Activated CD8-positive, alpha-beta memory T cell treated with anti-CD3 and anti-CD28 coated beads, Interleukin-2, amount 10 ng/mL, durations not matched to agents 7 days and 5 days (primary cell): ENCODE measurements at regions of chr17 and their contacts with region 1.

Region 1: GRCh38 chr17:72556944-72557826 is 436.4 kb downstream of the SOX9 start:
- DNase-seq: peak; percentile 76
- ATAC-seq: peak; percentile 72
- H3K4me3 Mint-ChIP-seq: no peak overlapping the region
- H3K27ac Mint-ChIP-seq: no peak overlapping the region
- H3K4me1 Mint-ChIP-seq: no peaks in the 10 kb centered on the region
- H3K27me3 Mint-ChIP-seq: no peaks in the 10 kb centered on the region

Region 2: GRCh38 chr17:72592242-72592966 is 35.2 kb after region 1 on chr17:
- CTCF ChIA-PET with region 1: interaction called, 12 read pairs
- DNase-seq: peak; percentile 76
- ATAC-seq: peak; percentile 89
- H3K4me3 Mint-ChIP-seq: peak overlapping the region; percentile 79
- H3K27ac Mint-ChIP-seq: peak overlapping the region; percentile 20
- H3K4me1 Mint-ChIP-seq: peaks cover 31% of the 10 kb centered on the region
- H3K27me3 Mint-ChIP-seq: peaks cover 74% of the 10 kb centered on the region

Region 3: DNA sequence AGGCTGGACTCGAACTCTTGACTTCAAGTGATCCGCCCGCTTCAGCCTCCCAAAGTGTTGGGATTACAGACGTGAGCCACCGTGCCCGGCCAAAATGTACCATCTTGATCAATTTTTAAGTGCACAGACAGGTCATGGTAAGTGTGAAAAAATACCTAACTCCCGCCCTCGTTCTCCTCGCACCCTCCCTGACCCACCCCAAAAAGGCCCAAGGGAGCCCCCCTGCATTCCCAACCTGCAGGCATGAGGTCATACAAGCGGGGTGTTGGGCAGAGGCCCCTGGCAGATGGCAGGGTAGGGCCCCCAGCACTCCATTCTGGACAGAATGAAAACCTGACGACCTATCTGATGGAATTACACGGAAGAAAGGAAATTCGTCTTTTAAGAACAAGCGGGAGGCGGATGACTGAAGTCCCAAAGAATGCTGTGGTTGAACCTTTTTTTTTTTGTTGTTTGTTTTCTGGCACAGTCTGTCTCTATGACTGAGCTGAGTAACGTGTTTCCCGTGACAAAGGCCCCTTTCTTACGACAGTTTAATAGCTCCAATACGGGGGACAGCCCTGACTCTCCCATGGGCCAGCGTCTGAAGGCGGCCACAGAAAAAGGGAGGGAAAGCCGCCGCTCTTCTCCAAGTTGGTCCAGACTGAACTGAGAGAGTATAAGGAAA is 158.9 kb after region 1 on chr17:
- CTCF ChIA-PET with region 1: interaction called, 28 read pairs
- DNase-seq: no peak
- ATAC-seq: no peak
- H3K4me3 Mint-ChIP-seq: no peak overlapping the region
- H3K27ac Mint-ChIP-seq: no peak overlapping the region
- H3K4me1 Mint-ChIP-seq: peaks cover 31% of the 10 kb centered on the region
- H3K27me3 Mint-ChIP-seq: no peaks in the 10 kb centered on the region

Region 4: DNA sequence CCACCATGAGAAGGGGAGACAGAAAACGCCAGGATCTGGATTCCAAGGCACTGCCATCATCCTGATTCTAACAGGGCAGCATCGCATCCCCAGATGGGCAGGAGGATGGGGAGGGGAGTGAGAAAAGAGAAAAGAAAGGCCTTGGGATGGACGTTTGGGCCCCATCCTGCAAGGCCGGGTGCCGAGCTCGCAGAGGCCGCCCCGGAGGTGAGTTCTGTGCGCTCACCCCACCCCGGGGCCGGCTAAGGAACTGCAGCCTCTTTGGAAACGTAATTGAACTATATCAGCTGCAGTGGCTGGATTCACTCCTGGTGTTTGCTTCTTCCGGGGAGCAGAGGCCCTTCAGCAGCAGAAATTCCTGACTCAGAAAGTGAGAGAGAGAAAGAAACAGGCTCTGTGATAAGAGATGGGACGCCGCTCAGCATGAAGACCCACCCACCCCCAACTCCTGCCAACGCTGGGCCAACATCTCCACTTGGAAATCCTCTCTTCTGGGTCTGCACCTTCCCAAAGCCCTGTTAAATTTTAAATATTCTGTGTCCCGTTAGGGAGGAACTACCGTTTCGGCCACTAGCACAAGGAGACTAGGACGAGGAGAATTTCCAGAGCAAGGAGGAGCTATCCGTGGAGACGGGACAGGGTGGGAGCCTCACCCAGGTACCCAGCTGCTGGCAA is 599.1 kb after region 1 on chr17:
- CTCF ChIA-PET with region 1: interaction called, 35 read pairs
- DNase-seq: peak; percentile 65
- ATAC-seq: peak; percentile 92
- H3K4me3 Mint-ChIP-seq: no peak overlapping the region
- H3K27ac Mint-ChIP-seq: no peak overlapping the region
- H3K4me1 Mint-ChIP-seq: peaks cover 6% of the 10 kb centered on the region
- H3K27me3 Mint-ChIP-seq: peaks cover 25% of the 10 kb centered on the region

Region 5: DNA sequence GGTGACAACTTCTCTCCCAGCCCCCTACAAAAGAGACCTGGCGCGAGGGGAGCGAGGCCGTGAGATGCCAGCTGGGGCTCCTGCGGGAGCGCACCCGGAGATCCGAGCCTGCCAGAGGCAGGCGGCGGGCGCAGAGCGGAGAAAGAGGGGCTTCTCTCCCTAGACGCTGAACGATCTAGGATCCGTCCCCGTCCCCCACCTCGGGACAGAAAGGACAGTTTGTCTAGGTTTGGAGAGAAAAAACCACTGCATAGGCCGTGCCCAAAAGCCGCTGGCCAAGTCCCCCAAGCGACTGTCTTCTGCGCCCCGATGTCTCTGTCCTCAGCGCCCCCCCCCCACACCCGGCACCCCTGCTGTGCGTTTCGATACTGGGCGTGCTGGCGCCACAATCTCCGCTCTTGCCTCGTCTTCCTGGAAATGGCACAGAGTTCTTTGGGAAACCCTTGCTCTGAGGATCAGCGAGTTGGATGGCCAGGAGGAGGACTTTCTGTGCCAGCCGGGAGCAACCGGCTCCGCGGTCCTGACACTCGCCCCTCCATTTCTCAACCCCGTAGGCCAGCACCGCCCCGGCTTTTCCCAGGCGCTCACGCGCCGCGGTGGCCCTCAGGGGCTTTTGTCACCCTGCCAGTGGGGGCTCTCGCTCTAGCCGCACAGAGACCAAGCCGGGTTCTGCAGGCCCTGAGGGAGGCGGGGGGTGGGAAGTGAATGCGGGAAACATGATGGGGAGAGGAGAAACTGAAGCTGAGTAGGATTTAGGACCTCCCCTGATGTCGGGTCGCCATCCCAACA is 608.6 kb after region 1 on chr17:
- CTCF ChIA-PET with region 1: interaction called, 17 read pairs
- DNase-seq: no peak
- ATAC-seq: no peak
- H3K4me3 Mint-ChIP-seq: peak overlapping the region; percentile 54
- H3K27ac Mint-ChIP-seq: no peak overlapping the region
- H3K4me1 Mint-ChIP-seq: peaks cover 35% of the 10 kb centered on the region
- H3K27me3 Mint-ChIP-seq: peaks cover 80% of the 10 kb centered on the region

Region 6: DNA sequence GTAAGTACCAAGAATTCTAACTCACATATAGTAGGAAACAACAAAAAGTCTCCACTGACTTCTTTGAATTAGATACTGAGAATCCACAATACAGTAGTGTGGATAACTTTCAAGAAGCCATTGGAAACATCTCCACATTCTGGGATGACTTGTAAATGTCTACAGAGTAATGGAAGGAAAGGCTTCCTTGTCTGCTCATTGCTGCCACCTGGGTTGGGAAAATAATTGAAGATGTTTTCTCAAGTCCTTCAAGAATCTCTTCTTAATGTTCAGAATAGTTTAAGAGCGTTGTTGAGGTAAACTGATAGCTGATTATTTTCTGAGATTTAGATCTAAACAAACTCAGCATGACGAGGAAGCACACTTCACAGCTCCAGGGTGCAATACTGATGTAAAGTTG is 690.5 kb after region 1 on chr17:
- CTCF ChIA-PET with region 1: interaction called, 14 read pairs
- DNase-seq: no peak
- ATAC-seq: no peak
- H3K4me3 Mint-ChIP-seq: no peak overlapping the region
- H3K27ac Mint-ChIP-seq: no peak overlapping the region
- H3K4me1 Mint-ChIP-seq: no peaks in the 10 kb centered on the region
- H3K27me3 Mint-ChIP-seq: no peaks in the 10 kb centered on the region